Panc1 (cell line): ENCODE measurements at regions of chr3 and their contacts with region 1.

Region 1: DNA sequence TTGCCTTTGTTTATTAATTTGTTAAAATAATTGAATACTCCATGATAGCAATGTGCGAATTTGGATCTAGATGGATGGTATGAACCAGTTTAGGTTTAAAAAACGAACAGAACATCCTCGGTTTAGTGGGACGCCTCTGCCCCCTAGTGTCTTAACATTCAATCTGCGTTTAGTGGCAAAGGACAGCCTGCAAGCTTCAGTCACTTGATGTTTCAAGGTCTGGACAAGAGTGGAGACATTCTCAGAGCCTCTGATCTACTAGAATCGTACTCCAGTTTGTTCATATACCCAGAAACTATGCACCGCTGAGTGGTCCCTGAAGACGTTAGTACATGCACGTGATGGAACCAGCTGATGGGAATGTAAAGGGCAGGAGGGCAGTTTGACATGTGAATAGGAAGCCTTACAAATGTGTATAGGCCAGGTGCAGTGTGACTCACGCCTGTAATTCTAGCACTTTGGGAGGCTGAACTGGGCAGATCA is 17.8 kb upstream of the ATP13A4 start:
- DNase-seq: peak; percentile 56
- ATAC-seq: peak; percentile 93
- H3K4me3 ChIP-seq: no peak overlapping the region
- H3K27ac ChIP-seq: no peak overlapping the region
- H3K4me1 ChIP-seq: no peaks in the 10 kb centered on the region
- H3K27me3 ChIP-seq: peaks cover 20% of the 10 kb centered on the region
- CTCF ChIP-seq: peak; percentile 91

Region 2: GRCh38 chr3:192467230-192468140 is 1105.0 kb before region 1 on chr3:
- CTCF ChIA-PET with region 1: no interaction called
- POLR2A ChIA-PET with region 1: no interaction called
- in situ Hi-C with region 1: no loop called
- intact Hi-C with region 1: loop called (anchors 5 kb)
- DNase-seq: peak; percentile 33
- ATAC-seq: peak; percentile 91
- H3K4me3 ChIP-seq: no peak overlapping the region
- H3K27ac ChIP-seq: no peak overlapping the region
- H3K4me1 ChIP-seq: peaks cover 3% of the 10 kb centered on the region; the same call in 1 of the 2 replicates
- H3K27me3 ChIP-seq: peaks cover 20% of the 10 kb centered on the region
- CTCF ChIP-seq: peak; percentile 92

Region 3: DNA sequence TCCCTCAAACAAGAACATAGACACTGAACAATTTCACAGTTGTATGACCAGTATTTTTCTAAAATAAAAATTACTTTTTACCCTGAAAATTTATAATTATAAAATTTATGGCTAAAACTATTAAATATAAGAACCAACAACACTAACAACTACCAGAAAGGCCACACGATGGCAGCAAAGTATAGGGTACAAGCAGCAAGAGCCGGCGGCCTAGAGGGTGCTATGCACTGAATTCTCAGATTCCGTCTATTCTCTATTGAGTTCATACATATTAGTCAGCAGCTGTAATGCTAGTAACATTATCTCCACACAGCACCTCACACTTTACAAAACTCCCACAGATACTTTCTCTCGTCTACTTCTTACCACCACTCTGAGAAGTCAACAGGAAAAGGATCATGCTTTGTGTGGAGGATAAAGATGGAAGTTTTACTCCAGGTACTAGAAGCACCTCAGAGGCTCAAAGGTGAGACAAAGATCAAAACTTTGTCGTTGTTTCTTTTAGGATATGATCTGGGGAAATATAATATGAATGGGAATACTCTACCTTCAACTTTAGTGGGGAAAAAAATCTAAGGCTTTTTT is 1005.7 kb before region 1 on chr3:
- CTCF ChIA-PET with region 1: no interaction called
- POLR2A ChIA-PET with region 1: no interaction called
- in situ Hi-C with region 1: no loop called
- intact Hi-C with region 1: loop called (anchors 5 kb)
- DNase-seq: peak; percentile 46
- ATAC-seq: peak; percentile 93
- H3K4me3 ChIP-seq: no peak overlapping the region
- H3K27ac ChIP-seq: no peak overlapping the region
- H3K4me1 ChIP-seq: peaks cover 5% of the 10 kb centered on the region; the same call in 1 of the 2 replicates
- H3K27me3 ChIP-seq: peaks cover 2% of the 10 kb centered on the region; the same call in 1 of the 2 replicates
- CTCF ChIP-seq: peak; percentile 87

Region 4: DNA sequence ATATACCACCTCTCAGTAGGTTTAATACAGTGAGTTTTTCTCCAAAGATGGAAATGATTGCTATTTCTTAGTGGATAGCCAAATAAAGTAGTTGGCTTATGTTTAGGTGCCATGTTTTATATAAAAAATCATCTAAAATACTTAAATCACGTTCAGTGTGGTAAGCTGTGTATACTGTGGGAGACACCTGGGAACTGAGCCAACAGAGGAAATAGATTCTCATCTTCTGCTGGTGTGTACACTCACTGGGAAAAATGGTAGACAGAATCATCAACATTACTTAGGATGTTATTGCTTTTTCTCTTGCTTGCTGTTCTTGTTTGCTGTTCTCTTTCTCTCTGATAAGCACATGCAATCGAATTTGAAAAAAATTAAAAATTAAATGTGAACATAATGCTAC is 542.2 kb before region 1 on chr3:
- CTCF ChIA-PET with region 1: no interaction called
- POLR2A ChIA-PET with region 1: no interaction called
- in situ Hi-C with region 1: no loop called
- intact Hi-C with region 1: loop called (anchors 10 kb)
- DNase-seq: no peak
- ATAC-seq: no peak
- H3K4me3 ChIP-seq: no peak overlapping the region
- H3K27ac ChIP-seq: no peak overlapping the region
- H3K4me1 ChIP-seq: no peaks in the 10 kb centered on the region
- H3K27me3 ChIP-seq: peaks cover 16% of the 10 kb centered on the region
- CTCF ChIP-seq: no peak

Region 5: DNA sequence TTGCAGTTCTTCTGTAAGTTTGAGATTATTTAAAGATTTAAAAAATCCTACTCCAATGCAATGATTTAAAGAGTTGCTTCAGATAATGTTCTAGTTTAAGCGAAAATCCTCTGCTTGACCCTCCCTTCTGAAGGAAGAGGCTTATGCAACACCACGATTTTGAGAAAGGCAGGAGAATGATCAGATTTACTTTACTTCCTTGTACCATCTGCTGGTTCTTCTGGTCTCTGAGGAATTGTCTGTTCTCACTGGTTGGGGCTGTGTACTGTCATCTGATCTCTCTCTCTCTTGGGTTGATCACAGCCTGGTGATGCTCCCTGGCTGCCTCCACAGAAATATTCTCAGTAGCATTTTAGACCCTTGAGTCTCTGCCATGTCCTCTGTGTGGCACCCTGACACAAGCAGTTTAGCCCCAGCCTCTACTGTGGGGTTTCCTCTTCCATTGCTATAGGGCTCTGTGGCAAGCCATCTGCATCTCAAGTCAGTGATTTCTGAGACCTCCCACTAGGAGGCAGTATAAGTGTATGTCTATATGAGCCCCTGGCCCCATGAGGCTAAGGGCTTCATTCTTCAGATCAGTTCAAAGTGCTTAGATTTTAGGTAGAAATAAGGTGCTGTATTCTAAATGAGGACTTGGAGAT is 382.2 kb before region 1 on chr3:
- CTCF ChIA-PET with region 1: no interaction called
- POLR2A ChIA-PET with region 1: no interaction called
- in situ Hi-C with region 1: no loop called
- intact Hi-C with region 1: loop called (anchors 10 kb)
- DNase-seq: no peak
- ATAC-seq: peak; percentile 65; the same call in 1 of the 2 replicates
- H3K4me3 ChIP-seq: no peak overlapping the region
- H3K27ac ChIP-seq: no peak overlapping the region
- H3K4me1 ChIP-seq: no peaks in the 10 kb centered on the region
- H3K27me3 ChIP-seq: peaks cover 4% of the 10 kb centered on the region; the same call in 1 of the 2 replicates
- CTCF ChIP-seq: peak; percentile 63

Region 6: DNA sequence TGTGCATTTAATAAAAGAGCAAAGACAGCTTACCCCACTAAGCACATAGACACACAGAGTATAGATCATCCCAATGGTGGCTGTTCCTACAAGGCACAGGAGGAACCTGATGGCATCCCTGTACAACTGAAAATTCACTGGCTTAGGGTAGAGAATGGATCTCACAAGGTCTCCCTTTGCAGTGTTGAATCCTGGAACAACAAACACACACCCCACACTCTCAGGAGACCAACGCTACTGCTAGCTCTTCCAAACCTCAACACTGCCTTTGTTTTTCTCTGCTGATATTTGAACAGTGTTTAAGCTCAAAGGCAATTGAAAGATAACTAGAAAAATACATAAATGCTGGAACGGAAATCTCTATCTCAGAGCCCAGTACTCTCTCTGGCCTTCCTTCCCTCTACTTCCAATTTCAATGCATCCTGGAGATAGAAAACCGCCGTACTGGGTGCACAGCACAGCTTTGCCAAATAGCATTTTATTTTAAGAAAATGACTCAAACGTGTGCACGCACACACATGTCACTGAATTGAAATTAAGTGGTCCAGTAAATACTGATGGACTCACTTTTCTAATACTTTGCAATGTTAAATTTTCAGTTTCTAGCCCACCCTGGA is 106.4 kb before region 1 on chr3:
- CTCF ChIA-PET with region 1: interaction called, 6 read pairs
- POLR2A ChIA-PET with region 1: no interaction called
- in situ Hi-C with region 1: no loop called
- intact Hi-C with region 1: loop called (anchors 1 kb)
- DNase-seq: no peak
- ATAC-seq: no peak
- H3K4me3 ChIP-seq: no peak overlapping the region
- H3K27ac ChIP-seq: no peak overlapping the region
- H3K4me1 ChIP-seq: no peaks in the 10 kb centered on the region
- H3K27me3 ChIP-seq: peaks cover 3% of the 10 kb centered on the region; the same call in 1 of the 2 replicates
- CTCF ChIP-seq: no peak